GM12878 (cell line): ENCODE measurements at regions of chr10 and their contacts with region 1.

Region 1: DNA sequence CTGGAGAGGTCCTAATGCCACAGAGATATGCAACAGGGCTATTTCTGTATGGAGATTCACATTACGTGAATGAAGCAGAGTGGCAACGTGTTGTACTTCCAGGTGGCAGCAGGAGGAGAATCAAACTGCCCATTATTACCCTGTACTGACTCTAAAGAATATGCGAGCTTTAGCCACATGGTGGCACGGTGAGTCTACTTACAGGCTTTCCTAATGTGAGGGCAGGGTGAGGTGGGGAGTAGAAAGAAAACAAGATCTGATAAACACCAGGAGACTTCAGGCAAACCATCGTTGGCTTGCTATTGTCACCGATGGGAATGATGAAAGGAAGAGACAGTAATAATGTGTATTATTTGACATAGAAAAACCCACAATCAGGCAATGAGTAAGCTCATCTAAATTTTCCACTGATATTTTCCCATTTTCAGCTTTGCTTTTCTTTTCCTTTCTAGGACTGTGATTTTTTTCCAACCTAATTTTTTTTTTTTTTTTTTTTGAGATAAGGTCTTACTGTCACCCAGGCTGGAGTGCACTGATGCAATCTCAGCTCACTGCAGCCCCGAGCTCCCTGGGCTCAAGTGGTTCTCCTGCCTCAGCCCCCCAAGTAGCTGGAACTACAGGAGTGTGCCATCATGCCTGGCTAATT is 164.3 kb downstream of the BTAF1 start:
- DNase-seq: peak; percentile 64
- ATAC-seq: peak; percentile 98
- H3K4me3 ChIP-seq: no peak overlapping the region
- H3K27ac ChIP-seq: no peak overlapping the region
- H3K4me1 ChIP-seq: peaks cover 19% of the 10 kb centered on the region
- H3K27me3 ChIP-seq: no peaks in the 10 kb centered on the region
- CTCF ChIP-seq: peak; percentile 71 to 98 (median 89)
- EP300 ChIP-seq: no peak
- POLR2A ChIP-seq: no peak
- RAD21 ChIP-seq: peak; percentile 100

Region 2: GRCh38 chr10:92074126-92074887 is 13.6 kb before region 1 on chr10:
- CTCF ChIA-PET with region 1: interaction called, 16 read pairs
- POLR2A ChIA-PET with region 1: no interaction called
- RAD21 ChIA-PET with region 1: interaction called, 3 read pairs
- SMC1A ChIA-PET with region 1: interaction called, 10 read pairs
- in situ Hi-C with region 1: no loop called
- intact Hi-C with region 1: no loop called
- DNase-seq: no peak
- ATAC-seq: peak; percentile 55
- H3K4me3 ChIP-seq: no peak overlapping the region
- H3K27ac ChIP-seq: no peak overlapping the region
- H3K4me1 ChIP-seq: no peaks in the 10 kb centered on the region
- H3K27me3 ChIP-seq: no peaks in the 10 kb centered on the region
- CTCF ChIP-seq: peak in 1 of 3 experiments; percentile 16; a peak in 1 of 6 replicates
- EP300 ChIP-seq: no peak
- POLR2A ChIP-seq: no peak
- RAD21 ChIP-seq: peak; percentile 31; the same call in 1 of the 2 replicates

Region 3: DNA sequence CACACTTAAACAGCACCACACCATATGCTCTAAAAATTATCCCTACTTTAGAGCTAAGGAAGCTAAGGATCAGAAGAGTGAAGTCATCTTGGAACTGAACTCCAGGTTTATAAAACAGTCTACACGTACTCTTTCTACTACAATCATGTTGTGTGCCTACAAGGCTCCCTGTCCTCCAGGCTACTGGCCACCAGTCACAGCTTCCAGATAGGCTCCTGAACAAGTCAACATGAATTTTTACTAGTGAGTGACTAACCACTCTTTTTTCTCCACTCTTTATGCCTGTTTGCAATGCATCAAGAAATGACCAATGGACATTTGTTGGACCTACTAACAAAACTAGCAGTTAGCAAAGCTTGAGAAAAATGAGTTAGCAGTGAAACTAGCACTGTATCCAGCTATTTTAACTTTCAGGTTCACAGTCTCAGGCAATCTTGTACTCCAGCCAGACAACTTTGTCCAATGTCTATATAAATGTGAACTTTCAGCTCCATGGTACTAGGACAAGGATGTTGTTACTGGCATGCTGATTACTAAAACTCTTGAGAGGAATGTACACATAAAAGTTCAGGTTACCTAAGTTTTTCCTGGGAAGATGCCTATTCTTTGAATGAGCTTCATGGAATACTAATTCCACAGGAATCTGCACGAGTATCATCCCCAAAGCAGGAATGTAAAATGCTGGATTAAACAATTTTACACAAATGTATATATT is 15.7 kb after region 1 on chr10:
- CTCF ChIA-PET with region 1: interaction called, 42 read pairs
- POLR2A ChIA-PET with region 1: interaction called, 8 read pairs
- RAD21 ChIA-PET with region 1: interaction called, 35 read pairs
- SMC1A ChIA-PET with region 1: interaction called, 77 read pairs
- in situ Hi-C with region 1: no loop called
- intact Hi-C with region 1: no loop called
- DNase-seq: no peak
- ATAC-seq: no peak
- H3K4me3 ChIP-seq: no peak overlapping the region
- H3K27ac ChIP-seq: no peak overlapping the region
- H3K4me1 ChIP-seq: peaks cover 30% of the 10 kb centered on the region
- H3K27me3 ChIP-seq: no peaks in the 10 kb centered on the region
- CTCF ChIP-seq: no peak
- EP300 ChIP-seq: no peak
- POLR2A ChIP-seq: no peak
- RAD21 ChIP-seq: no peak

Region 4: GRCh38 chr10:92208736-92209327 is 121.0 kb after region 1 on chr10:
- CTCF ChIA-PET with region 1: interaction called, 14 read pairs
- POLR2A ChIA-PET with region 1: interaction called, 4 read pairs
- RAD21 ChIA-PET with region 1: interaction called, 12 read pairs
- SMC1A ChIA-PET with region 1: interaction called, 10 read pairs
- in situ Hi-C with region 1: no loop called
- intact Hi-C with region 1: loop called (anchors 5 kb)
- DNase-seq: no peak
- ATAC-seq: no peak
- H3K4me3 ChIP-seq: no peak overlapping the region
- H3K27ac ChIP-seq: no peak overlapping the region
- H3K4me1 ChIP-seq: peaks cover 19% of the 10 kb centered on the region
- H3K27me3 ChIP-seq: no peaks in the 10 kb centered on the region
- CTCF ChIP-seq: no peak
- EP300 ChIP-seq: no peak
- POLR2A ChIP-seq: no peak
- RAD21 ChIP-seq: no peak

Region 5: DNA sequence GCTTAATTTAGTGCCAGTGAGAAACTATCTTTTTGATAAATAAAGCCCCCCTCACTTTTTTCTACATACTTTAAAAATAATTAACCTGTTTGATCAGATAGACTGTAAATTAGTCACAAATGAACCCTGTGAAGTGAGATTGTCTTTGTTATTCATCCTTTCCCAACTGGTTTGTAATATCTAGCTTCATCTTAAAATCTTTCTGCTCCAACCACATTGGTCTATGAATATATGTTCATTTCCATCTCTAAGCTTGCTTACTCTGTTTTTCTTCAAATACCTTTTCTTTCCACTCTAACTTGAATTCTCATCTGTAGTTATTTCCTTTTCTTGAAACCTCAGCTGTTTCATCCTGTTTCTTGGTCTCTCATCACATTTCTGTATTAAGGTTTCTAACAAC is 215.2 kb after region 1 on chr10:
- CTCF ChIA-PET with region 1: interaction called, 17 read pairs
- POLR2A ChIA-PET with region 1: no interaction called
- RAD21 ChIA-PET with region 1: interaction called, 11 read pairs
- SMC1A ChIA-PET with region 1: interaction called, 8 read pairs
- in situ Hi-C with region 1: no loop called
- intact Hi-C with region 1: no loop called
- DNase-seq: no peak
- ATAC-seq: no peak; the same call in 2 of the 3 replicates
- H3K4me3 ChIP-seq: no peak overlapping the region
- H3K27ac ChIP-seq: no peak overlapping the region
- H3K4me1 ChIP-seq: no peaks in the 10 kb centered on the region
- H3K27me3 ChIP-seq: no peaks in the 10 kb centered on the region
- CTCF ChIP-seq: no peak
- EP300 ChIP-seq: no peak
- POLR2A ChIP-seq: no peak
- RAD21 ChIP-seq: no peak

Region 6: GRCh38 chr10:92432596-92432995 is 344.7 kb after region 1 on chr10:
- CTCF ChIA-PET with region 1: interaction called, 93 read pairs
- POLR2A ChIA-PET with region 1: no interaction called
- RAD21 ChIA-PET with region 1: interaction called, 38 read pairs
- SMC1A ChIA-PET with region 1: interaction called, 29 read pairs
- in situ Hi-C with region 1: loop called (anchors 5 kb)
- intact Hi-C with region 1: loop called (anchors 1 kb)
- DNase-seq: no peak
- ATAC-seq: no peak
- H3K4me3 ChIP-seq: no peak overlapping the region
- H3K27ac ChIP-seq: no peak overlapping the region
- H3K4me1 ChIP-seq: no peaks in the 10 kb centered on the region
- H3K27me3 ChIP-seq: no peaks in the 10 kb centered on the region
- CTCF ChIP-seq: no peak
- EP300 ChIP-seq: no peak
- POLR2A ChIP-seq: no peak
- RAD21 ChIP-seq: no peak

Region 7: DNA sequence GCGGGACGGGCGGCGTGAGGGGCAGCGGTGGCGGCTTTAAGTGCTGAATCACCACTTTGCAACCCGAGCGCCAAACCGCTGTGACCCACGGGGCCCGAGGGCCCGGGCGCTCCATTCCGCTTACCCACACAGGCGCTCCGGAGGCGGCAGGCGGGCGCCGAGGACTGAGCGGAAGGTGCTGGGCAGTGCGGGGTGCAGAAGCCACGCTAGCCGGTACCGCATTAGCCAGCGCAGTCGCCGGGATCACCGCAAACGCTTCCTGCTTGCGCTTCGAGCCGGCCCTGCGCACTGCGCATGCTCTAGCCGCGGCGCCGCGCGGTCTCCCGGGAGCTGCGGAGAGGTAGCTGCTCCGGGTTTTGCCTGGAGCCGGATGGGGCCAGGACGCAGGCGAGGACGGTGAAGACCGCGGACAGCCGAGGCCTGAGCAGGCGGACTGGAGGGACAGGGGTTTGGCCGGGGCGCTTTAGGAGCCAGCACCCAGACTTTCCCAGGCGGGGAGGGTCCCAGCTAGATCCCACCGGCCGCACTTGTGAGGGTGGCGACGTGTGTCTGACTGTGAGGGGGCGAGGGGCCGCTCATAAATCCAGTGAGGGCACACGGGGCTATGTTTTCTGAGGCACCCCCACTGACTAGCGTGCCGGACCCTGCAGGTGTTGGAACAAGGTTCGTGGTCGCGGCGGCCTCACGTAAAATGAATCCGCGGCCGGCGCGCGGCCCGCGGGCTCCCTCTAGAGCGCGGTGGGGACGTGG is 486.1 kb after region 1 on chr10 and contains the start of gene IDE:
- CTCF ChIA-PET with region 1: interaction called, 7 read pairs
- POLR2A ChIA-PET with region 1: no interaction called
- RAD21 ChIA-PET with region 1: interaction called, 8 read pairs
- SMC1A ChIA-PET with region 1: interaction called, 4 read pairs
- in situ Hi-C with region 1: no loop called
- intact Hi-C with region 1: loop called (anchors 10 kb)
- DNase-seq: peak; percentile 45
- ATAC-seq: peak; percentile 82
- H3K4me3 ChIP-seq: peak within 1 kb of the TSS; percentile 82
- H3K27ac ChIP-seq: peak within 1 kb of the TSS; percentile 92
- H3K4me1 ChIP-seq: peaks cover 4% of the 10 kb centered on the region
- H3K27me3 ChIP-seq: no peaks in the 10 kb centered on the region
- CTCF ChIP-seq: peak; percentile 94 to 96 (median 94)
- EP300 ChIP-seq: no peak
- POLR2A ChIP-seq: peak; percentile 93
- RAD21 ChIP-seq: peak; percentile 88
- polyA plus RNA-seq, gene IDE: 11.6 to 13.1 TPM